ENCODE measurements at regions of chr5 and their contacts with region 1.

Region 1: DNA sequence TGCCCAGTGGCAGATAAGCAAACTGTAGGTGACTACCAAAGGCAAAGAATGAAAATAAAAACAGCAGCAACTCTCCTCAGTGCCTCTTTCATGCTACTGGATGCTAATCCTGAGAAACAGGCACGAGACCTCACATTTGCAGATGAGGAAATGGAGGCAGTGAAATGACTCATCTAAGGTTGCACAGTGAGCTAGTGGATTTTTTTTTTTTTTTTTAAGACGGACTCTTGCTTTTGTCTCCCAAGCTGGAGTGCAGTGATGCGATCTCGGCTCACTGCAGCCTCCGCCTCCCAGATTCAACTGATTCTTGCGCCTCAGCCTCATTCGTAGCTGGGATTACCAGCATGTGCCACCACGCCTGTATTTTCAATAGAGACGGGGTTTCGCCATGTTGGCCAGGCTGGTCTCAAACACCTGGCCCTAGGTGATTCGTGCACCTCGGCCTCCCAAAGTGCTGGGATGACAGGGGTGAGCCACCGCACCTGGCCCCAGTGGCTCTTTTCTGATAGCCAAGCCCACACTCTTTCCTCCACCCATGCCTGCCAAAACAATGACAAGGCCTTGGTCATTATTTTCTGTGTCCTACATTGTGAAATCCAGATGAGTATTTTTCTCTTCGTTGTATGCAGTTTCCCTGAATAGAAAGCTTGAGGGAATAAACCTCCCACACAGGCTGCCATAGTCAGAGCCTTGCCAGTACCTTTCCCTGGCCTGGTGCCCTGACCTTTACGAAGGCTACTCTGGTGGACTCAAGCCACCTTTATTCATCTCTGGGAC is 19.2 kb downstream of the DOCK2 start:
- DNase-seq: peak; percentile 80
- H3K4me3 Mint-ChIP-seq: no peak overlapping the region
- H3K27ac Mint-ChIP-seq: no peak overlapping the region
- H3K4me1 Mint-ChIP-seq: peaks cover 10% of the 10 kb centered on the region
- H3K27me3 Mint-ChIP-seq: no peaks in the 10 kb centered on the region
- CTCF ChIP-seq: no peak

Region 2: GRCh38 chr5:168353216-168353957 is 1302.9 kb before region 1 on chr5:
- CTCF ChIA-PET with region 1: no interaction called
- POLR2A ChIA-PET with region 1: no interaction called
- intact Hi-C with region 1: no loop called
- DNase-seq: peak; percentile 20
- H3K4me3 Mint-ChIP-seq: no peak overlapping the region
- H3K27ac Mint-ChIP-seq: no peak overlapping the region
- H3K4me1 Mint-ChIP-seq: peaks cover 13% of the 10 kb centered on the region
- H3K27me3 Mint-ChIP-seq: no peaks in the 10 kb centered on the region
- CTCF ChIP-seq: no peak

Region 3: GRCh38 chr5:169602535-169602934 is 53.8 kb before region 1 on chr5:
- CTCF ChIA-PET with region 1: no interaction called
- POLR2A ChIA-PET with region 1: no interaction called
- intact Hi-C with region 1: loop called (anchors 2 kb)
- DNase-seq: no peak
- H3K4me3 Mint-ChIP-seq: no peak overlapping the region
- H3K27ac Mint-ChIP-seq: no peak overlapping the region
- H3K4me1 Mint-ChIP-seq: no peaks in the 10 kb centered on the region
- H3K27me3 Mint-ChIP-seq: no peaks in the 10 kb centered on the region
- CTCF ChIP-seq: no peak

Measured in MCF 10A (cell line).